B cell (primary cell): ENCODE measurements at regions of chr7 and their contacts with region 1.

Region 1: GRCh38 chr7:129091484-129092002 is 36.6 kb upstream of the TNPO3 start:
- DNase-seq: peak; percentile 88
- ATAC-seq: peak; percentile 85
- H3K4me3 ChIP-seq: no peak overlapping the region
- H3K4me3 Mint-ChIP-seq: peak overlapping the region; percentile 47
- H3K27ac ChIP-seq: peak overlapping the region in 1 of 2 donors; percentile 58
- H3K27ac Mint-ChIP-seq: peak overlapping the region; percentile 82
- H3K4me1 ChIP-seq: peaks cover 31% of the 10 kb centered on the region in 2 donors
- H3K4me1 Mint-ChIP-seq: peaks cover 40% of the 10 kb centered on the region
- H3K27me3 ChIP-seq: no peaks in the 10 kb centered on the region
- H3K27me3 Mint-ChIP-seq: no peaks in the 10 kb centered on the region
- CTCF ChIP-seq: peak; percentile 97

Region 2: GRCh38 chr7:127194571-127194970 is 1897.0 kb before region 1 on chr7:
- CTCF ChIA-PET with region 1: no interaction called
- POLR2A ChIA-PET with region 1: no interaction called
- intact Hi-C with region 1: no loop called
- DNase-seq: no peak
- ATAC-seq: no peak
- H3K4me3 ChIP-seq: no peak overlapping the region
- H3K4me3 Mint-ChIP-seq: no peak overlapping the region
- H3K27ac ChIP-seq: no peak overlapping the region
- H3K27ac Mint-ChIP-seq: no peak overlapping the region
- H3K4me1 ChIP-seq: no peaks in the 10 kb centered on the region
- H3K4me1 Mint-ChIP-seq: no peaks in the 10 kb centered on the region
- H3K27me3 ChIP-seq: no peaks in the 10 kb centered on the region
- H3K27me3 Mint-ChIP-seq: peaks cover 3% of the 10 kb centered on the region
- CTCF ChIP-seq: no peak

Region 3: GRCh38 chr7:128899392-128899791 is 192.2 kb before region 1 on chr7:
- CTCF ChIA-PET with region 1: interaction called, 28 read pairs
- POLR2A ChIA-PET with region 1: no interaction called
- intact Hi-C with region 1: loop called (anchors 1 kb)
- DNase-seq: peak; percentile 31
- ATAC-seq: no peak
- H3K4me3 ChIP-seq: no peak overlapping the region
- H3K4me3 Mint-ChIP-seq: no peak overlapping the region
- H3K27ac ChIP-seq: no peak overlapping the region
- H3K27ac Mint-ChIP-seq: no peak overlapping the region
- H3K4me1 ChIP-seq: peaks cover 0 to 2% of the 10 kb centered on the region in 2 donors
- H3K4me1 Mint-ChIP-seq: peaks cover 1% of the 10 kb centered on the region
- H3K27me3 ChIP-seq: peaks cover 0 to 3% (median 0%) of the 10 kb centered on the region in 4 experiments
- H3K27me3 Mint-ChIP-seq: peaks cover 6% of the 10 kb centered on the region
- CTCF ChIP-seq: no peak

Region 4: DNA sequence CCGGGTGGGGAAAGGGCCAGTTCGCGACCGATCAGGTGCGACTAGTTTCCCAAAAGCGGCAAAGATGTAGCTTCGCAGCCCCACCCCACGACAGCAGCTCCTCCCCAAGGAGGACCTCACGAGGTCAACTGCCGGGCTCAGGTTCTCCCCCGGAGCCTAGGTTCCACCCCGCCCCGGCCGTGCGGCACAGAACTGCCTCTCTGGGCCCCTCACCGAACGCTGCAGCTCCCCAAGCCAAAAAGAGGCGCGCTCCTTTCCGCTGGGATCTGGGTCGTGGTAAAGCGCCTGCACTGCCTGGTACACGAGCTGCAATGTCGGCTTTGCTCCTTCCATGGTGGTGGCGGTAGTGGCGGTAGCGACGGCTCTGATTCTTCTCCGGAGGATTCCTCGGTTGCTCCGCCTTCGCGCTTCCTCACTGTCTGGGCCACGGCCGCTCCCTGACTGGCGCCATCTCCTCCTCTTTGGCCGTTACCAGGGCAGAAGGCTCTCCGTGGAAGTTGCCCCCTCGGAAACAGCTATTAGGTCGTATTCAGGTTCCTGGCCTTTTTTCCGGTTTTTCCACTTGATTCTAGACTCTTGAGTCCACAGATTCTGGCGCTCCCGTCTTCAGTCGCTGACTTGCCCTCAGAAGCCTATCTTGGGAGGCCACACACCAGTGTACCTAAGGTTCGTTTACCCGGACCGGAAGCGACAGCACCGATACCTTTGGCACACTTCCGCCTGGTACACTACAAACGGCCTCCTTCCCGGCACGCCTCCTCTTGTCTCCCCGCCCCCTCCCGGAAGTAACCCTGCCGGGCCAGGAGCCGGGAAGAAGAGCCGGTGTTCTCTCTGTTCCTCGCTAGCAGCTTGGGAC is 36.9 kb before region 1 on chr7 and contains the start of gene TNPO3:
- CTCF ChIA-PET with region 1: interaction called, 15 read pairs
- POLR2A ChIA-PET with region 1: interaction called, 5 read pairs
- intact Hi-C with region 1: loop called (anchors 2 kb)
- DNase-seq: peak; percentile 94
- ATAC-seq: peak; percentile 81
- H3K4me3 ChIP-seq: peak within 1 kb of the TSS; percentile 72 to 99 (median 92)
- H3K4me3 Mint-ChIP-seq: peak within 1 kb of the TSS; percentile 98
- H3K27ac ChIP-seq: peak within 1 kb of the TSS; percentile 90 to 96
- H3K27ac Mint-ChIP-seq: peak within 1 kb of the TSS; percentile 99
- H3K4me1 ChIP-seq: peaks cover 31 to 33% of the 10 kb centered on the region in 2 donors
- H3K4me1 Mint-ChIP-seq: peaks cover 42% of the 10 kb centered on the region
- H3K27me3 ChIP-seq: no peaks in the 10 kb centered on the region
- H3K27me3 Mint-ChIP-seq: no peaks in the 10 kb centered on the region
- CTCF ChIP-seq: no peak
- total RNA-seq, gene TNPO3: 47.8 and 48.3 TPM in 2 replicates

Region 5: GRCh38 chr7:129122751-129123509 is 31.4 kb after region 1 on chr7:
- CTCF ChIA-PET with region 1: interaction called, 10 read pairs
- POLR2A ChIA-PET with region 1: interaction called, 5 read pairs
- intact Hi-C with region 1: no loop called
- DNase-seq: peak; percentile 60
- ATAC-seq: peak; percentile 88
- H3K4me3 ChIP-seq: no peak overlapping the region
- H3K4me3 Mint-ChIP-seq: peak overlapping the region; percentile 61
- H3K27ac ChIP-seq: peak overlapping the region; percentile 53 to 68
- H3K27ac Mint-ChIP-seq: peak overlapping the region; percentile 87
- H3K4me1 ChIP-seq: peaks cover 21% of the 10 kb centered on the region in 2 donors
- H3K4me1 Mint-ChIP-seq: peaks cover 33% of the 10 kb centered on the region
- H3K27me3 ChIP-seq: no peaks in the 10 kb centered on the region
- H3K27me3 Mint-ChIP-seq: no peaks in the 10 kb centered on the region
- CTCF ChIP-seq: no peak

Region 6: DNA sequence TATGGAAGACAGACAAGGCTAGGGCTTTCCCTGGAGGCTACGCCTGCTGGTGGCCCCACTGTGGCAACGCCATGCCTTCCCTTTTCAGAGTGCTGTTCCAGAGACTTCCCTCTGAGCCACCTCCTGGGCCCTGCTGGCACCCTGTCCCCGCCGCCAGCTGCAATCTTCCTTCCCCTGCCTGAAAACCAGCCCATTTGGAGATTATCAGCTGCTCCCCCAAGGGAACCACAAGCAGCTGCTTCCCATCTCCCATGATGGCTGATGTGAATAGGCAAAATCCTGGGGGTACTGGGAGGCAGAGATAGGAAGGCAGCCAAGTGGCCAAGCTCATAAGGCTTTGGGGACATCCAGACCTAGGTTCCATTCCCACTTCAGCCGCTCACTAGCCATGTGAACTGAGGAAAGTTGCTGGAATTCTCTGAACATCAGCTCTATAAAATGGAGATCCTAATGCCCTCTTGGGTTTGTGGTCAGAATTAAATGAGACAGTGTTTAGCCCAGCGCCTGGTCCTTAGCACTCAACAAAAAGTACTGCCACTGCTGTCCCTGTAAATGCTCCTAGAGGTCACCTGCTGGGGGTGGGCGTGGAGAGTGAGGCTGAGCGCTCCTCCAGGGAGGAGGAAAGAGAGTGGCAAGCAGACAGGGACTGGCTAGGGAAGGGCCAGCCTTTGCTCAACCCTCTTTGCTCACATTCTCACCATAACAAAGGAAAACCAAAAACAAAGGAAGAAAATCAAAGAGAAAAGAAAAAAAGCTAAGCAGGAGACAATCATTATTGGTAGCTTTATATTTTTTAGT is 58.9 kb after region 1 on chr7:
- CTCF ChIA-PET with region 1: interaction called, 43 read pairs
- POLR2A ChIA-PET with region 1: no interaction called
- intact Hi-C with region 1: loop called (anchors 2 kb)
- DNase-seq: no peak
- ATAC-seq: no peak
- H3K4me3 ChIP-seq: no peak overlapping the region
- H3K4me3 Mint-ChIP-seq: peak overlapping the region; percentile 14
- H3K27ac ChIP-seq: peak overlapping the region; percentile 1 to 97
- H3K27ac Mint-ChIP-seq: peak overlapping the region; percentile 99
- H3K4me1 ChIP-seq: peaks cover 51 to 53% of the 10 kb centered on the region in 2 donors
- H3K4me1 Mint-ChIP-seq: peaks cover 77% of the 10 kb centered on the region
- H3K27me3 ChIP-seq: no peaks in the 10 kb centered on the region
- H3K27me3 Mint-ChIP-seq: no peaks in the 10 kb centered on the region
- CTCF ChIP-seq: no peak

Region 7: DNA sequence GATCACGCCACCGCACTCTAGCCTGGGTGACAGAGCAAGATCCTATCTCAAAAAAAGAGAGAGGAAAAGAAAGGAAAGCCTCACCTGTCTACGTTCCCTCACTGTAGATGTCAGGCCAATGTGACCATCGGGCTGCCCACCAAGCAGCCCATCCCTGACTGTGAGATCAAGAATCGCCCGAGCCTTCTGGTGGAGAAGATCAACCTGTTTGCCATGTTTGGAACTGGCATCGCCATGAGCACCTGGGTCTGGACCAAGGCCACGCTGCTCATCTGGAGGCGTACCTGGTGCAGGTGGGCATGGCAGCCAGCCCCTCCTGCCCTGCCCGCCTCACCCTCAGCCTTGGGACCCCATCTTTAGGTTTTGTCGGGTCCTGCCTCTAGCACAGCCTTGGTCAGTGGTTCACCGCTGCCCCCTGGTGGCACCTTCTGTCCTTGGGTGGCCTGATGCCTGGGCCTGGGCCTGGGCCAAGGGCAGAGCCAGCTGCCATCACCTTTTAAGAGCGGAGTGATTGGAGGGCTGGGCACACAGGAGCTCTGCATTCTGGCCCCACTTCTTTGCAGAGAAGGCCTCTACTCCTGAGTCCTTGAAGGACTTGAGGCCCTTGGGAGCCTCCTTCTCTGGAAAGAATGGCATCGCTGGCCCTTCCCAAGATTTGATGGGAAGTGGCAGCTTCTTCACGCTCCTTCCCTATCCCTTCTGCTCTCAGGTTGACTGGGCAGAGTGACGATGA is 118.9 kb after region 1 on chr7:
- CTCF ChIA-PET with region 1: interaction called, 17 read pairs
- POLR2A ChIA-PET with region 1: no interaction called
- intact Hi-C with region 1: loop called (anchors 1 kb)
- DNase-seq: peak; percentile 82
- ATAC-seq: peak; percentile 90
- H3K4me3 ChIP-seq: no peak overlapping the region
- H3K4me3 Mint-ChIP-seq: no peak overlapping the region
- H3K27ac ChIP-seq: no peak overlapping the region
- H3K27ac Mint-ChIP-seq: no peak overlapping the region
- H3K4me1 ChIP-seq: no peaks in the 10 kb centered on the region
- H3K4me1 Mint-ChIP-seq: peaks cover 3% of the 10 kb centered on the region
- H3K27me3 ChIP-seq: no peaks in the 10 kb centered on the region
- H3K27me3 Mint-ChIP-seq: no peaks in the 10 kb centered on the region
- CTCF ChIP-seq: peak; percentile 84

Region 8: GRCh38 chr7:129315960-129316359 is 224.4 kb after region 1 on chr7:
- CTCF ChIA-PET with region 1: no interaction called
- POLR2A ChIA-PET with region 1: no interaction called
- intact Hi-C with region 1: no loop called
- DNase-seq: no peak
- ATAC-seq: no peak
- H3K4me3 ChIP-seq: no peak overlapping the region
- H3K4me3 Mint-ChIP-seq: no peak overlapping the region
- H3K27ac ChIP-seq: no peak overlapping the region
- H3K27ac Mint-ChIP-seq: no peak overlapping the region
- H3K4me1 ChIP-seq: no peaks in the 10 kb centered on the region
- H3K4me1 Mint-ChIP-seq: no peaks in the 10 kb centered on the region
- H3K27me3 ChIP-seq: no peaks in the 10 kb centered on the region
- H3K27me3 Mint-ChIP-seq: no peaks in the 10 kb centered on the region
- CTCF ChIP-seq: no peak

Region 9: DNA sequence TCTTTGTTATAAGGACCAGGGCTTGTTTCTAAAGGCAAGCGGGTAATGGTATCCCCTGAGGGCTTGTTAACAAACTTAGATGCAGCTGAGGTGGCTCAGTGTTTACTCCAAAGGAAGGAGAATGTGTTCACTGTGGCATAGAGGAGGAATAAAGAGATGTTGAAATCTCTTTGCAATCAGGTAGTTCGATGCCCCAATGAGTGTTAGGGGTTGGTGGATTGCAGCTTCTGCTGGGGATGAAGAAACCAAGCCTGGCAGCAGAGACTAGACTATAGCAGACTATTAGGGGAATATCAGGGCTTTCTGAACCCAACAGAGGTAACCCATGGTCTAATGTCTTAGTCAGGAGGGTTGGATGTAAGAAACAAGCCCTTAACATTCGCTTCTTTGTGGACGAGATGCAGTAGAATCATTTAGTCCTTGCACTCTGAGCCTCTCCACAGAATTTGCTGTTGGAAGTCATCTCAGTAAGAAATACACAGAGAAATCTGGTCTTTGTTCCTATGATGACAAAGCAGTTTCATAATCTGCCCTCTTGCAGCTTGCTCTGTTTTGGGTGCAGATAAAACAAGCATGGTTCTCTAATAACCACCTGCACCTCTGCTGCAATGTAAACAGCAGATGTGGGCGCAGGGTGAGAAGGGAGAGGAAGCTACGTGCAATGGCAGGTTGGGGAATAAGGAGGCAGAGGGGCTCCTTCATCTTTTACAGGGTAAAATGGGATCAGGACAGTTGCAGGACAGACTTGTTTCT is 628.6 kb after region 1 on chr7:
- CTCF ChIA-PET with region 1: no interaction called
- POLR2A ChIA-PET with region 1: no interaction called
- intact Hi-C with region 1: no loop called
- DNase-seq: no peak
- ATAC-seq: no peak
- H3K4me3 ChIP-seq: no peak overlapping the region
- H3K4me3 Mint-ChIP-seq: no peak overlapping the region
- H3K27ac ChIP-seq: no peak overlapping the region
- H3K27ac Mint-ChIP-seq: no peak overlapping the region
- H3K4me1 ChIP-seq: no peaks in the 10 kb centered on the region
- H3K4me1 Mint-ChIP-seq: no peaks in the 10 kb centered on the region
- H3K27me3 ChIP-seq: no peaks in the 10 kb centered on the region
- H3K27me3 Mint-ChIP-seq: no peaks in the 10 kb centered on the region
- CTCF ChIP-seq: no peak